ENCODE measurements at regions of chr10 and their contacts with region 1.

Region 1: DNA sequence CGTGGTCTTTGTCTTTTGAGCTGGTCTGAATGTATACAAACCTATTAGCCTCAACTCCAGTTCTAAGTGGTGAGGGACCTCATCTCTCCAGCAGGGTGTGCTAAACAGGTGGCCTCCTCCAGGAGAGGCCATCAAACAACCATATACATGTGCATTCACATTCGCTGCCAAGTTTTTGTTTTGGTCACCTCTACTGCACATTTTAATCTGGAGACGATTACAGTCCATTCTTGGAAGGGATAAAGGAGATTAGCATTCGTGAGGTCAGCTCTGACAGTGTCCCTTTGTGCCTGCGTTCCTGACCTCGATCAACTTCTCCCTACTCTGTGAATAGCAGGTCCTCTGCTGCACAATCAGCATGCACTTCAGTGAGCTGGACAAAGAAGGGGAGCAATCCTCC is 60.8 kb downstream of the RHOBTB1 start:
- DNase-seq: no peak
- ATAC-seq: peak; percentile 84
- H3K4me3 ChIP-seq: no peak overlapping the region
- H3K27ac ChIP-seq: no peak overlapping the region
- H3K4me1 ChIP-seq: no peaks in the 10 kb centered on the region
- H3K27me3 ChIP-seq: no peaks in the 10 kb centered on the region
- CTCF ChIP-seq: peak; percentile 33 to 42 (median 39); a peak in 4 of 6 replicates
- EP300 ChIP-seq: no peak
- POLR2A ChIP-seq: no peak
- RAD21 ChIP-seq: peak; percentile 32

Region 2: DNA sequence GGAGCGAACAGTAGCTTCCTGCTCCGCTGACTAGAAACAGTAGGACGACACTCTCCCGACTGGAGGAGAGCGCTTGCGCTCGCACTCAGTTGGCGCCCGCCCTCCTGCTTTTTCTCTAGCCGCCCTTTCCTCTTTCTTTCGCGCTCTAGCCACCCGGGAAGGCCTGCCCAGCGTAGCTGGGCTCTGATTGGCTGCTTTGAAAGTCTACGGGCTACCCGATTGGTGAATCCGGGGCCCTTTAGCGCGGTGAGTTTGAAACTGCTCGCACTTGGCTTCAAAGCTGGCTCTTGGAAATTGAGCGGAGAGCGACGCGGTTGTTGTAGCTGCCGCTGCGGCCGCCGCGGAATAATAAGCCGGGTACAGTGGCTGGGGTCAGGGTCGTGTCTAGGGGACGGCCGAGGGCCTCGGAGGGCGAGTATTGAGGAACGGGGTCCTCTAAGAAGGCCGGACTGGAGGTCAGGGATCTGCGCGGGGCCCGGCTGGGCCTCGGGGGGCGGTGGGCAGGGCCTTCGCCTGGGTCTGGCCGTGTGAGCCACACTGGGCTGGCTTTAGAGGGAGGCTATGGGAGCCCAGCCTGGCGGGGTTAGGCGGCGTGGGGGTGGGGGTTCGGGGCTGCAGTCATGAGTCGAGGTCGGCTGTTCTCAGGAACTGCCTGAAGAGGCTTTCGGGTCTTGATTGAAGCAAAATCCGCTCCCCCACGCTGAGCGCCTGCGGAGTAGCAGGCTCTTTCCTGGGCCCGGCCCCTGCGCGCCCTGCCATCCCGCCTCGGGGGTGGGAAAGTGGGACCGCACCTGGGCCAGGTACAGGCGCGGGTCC is 104.8 kb before region 1 on chr10 and contains the start of gene CDK1:
- CTCF ChIA-PET with region 1: no interaction called
- POLR2A ChIA-PET with region 1: no interaction called
- RAD21 ChIA-PET with region 1: no interaction called
- SMC1A ChIA-PET with region 1: no interaction called
- in situ Hi-C with region 1: no loop called
- intact Hi-C with region 1: no loop called
- DNase-seq: peak; percentile 89
- ATAC-seq: peak; percentile 97
- H3K4me3 ChIP-seq: peak within 1 kb of the TSS; percentile 98
- H3K27ac ChIP-seq: peak within 1 kb of the TSS; percentile 82
- H3K4me1 ChIP-seq: peaks cover 3% of the 10 kb centered on the region; the same call in 1 of the 2 replicates
- H3K27me3 ChIP-seq: no peaks in the 10 kb centered on the region
- CTCF ChIP-seq: no peak
- EP300 ChIP-seq: 0 out of 4 replicates have a peak, but pooled peaks of 1 of the 2 experiments have one; percentile 24
- POLR2A ChIP-seq: peak; percentile 91
- RAD21 ChIP-seq: no peak
- polyA plus RNA-seq, gene CDK1: 228 to 361 TPM

Region 3: DNA sequence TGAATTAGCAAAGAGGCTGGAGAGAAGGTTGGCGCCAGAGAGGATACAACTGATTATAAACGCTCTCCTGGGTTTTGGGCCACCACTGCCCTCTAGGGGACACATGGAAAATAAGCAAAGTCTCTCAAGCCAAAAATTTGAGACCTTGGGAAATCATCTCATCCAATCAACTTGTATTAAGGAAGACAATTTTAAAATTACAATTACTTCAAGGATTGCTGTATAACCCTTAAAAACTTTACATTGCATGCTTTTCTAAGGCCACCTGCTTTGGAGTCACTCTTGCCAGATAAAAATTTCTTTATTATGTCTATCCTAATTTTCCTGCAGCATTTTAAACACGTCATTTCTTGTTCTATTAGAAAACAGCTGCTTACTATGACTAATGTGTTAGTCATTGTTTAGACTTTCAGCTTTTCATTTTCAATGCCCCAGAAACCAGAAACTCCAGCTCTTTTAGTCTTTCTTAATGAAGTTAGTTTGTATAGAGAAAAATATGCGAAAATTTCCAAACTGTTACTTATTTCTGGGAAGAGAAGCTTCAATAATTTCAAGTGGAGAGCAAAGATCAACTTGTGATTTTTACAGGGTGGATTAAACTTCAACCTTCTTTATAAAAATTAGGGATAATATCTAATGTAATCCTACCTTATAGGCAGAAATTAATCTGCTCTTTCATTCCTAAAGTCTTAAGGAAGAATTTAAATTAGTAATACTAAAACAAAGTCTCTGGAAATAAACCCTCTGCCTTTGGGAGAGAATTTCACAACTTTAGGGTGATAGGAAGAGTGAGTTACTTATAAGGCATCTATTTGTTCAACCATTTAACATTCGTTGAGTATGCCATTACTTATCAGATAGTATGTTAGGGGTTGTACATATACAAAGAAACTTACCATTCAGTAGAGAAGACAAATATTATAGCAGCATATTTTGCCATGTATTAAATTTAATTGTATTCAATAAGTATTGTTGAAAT is 81.4 kb after region 1 on chr10:
- CTCF ChIA-PET with region 1: interaction called, 4 read pairs
- POLR2A ChIA-PET with region 1: no interaction called
- RAD21 ChIA-PET with region 1: no interaction called
- SMC1A ChIA-PET with region 1: interaction called, 3 read pairs
- in situ Hi-C with region 1: no loop called
- intact Hi-C with region 1: loop called (anchors 5 kb)
- DNase-seq: no peak
- ATAC-seq: peak; percentile 73
- H3K4me3 ChIP-seq: no peak overlapping the region
- H3K27ac ChIP-seq: no peak overlapping the region
- H3K4me1 ChIP-seq: no peaks in the 10 kb centered on the region
- H3K27me3 ChIP-seq: no peaks in the 10 kb centered on the region; a peak in 1 of 4 replicates
- CTCF ChIP-seq: peak; percentile 62 to 85 (median 73)
- EP300 ChIP-seq: no peak
- POLR2A ChIP-seq: no peak
- RAD21 ChIP-seq: peak; percentile 80